Left cardiac atrium (tissue), 4 donors: ENCODE measurements at regions of chr12 and their contacts with region 1.

Region 1: GRCh38 chr12:117836999-117837736 is 131.6 kb downstream of the KSR2 start:
- DNase-seq: peak; percentile 75
- ATAC-seq: peak; percentile 55 to 71

Region 2: GRCh38 chr12:117212563-117213190 is 624.5 kb before region 1 on chr12:
- intact Hi-C with region 1: loop called (anchors 1 to 2 kb)
- DNase-seq: peak; percentile 72
- ATAC-seq: peak; percentile 84 to 88

Region 3: GRCh38 chr12:117236456-117237001 is 600.6 kb before region 1 on chr12:
- intact Hi-C with region 1: loop called in 1 of 2 experiments (anchors 2 kb)
- DNase-seq: peak; percentile 81
- ATAC-seq: peak in 1 of 2 donors; percentile 24

Region 4: DNA sequence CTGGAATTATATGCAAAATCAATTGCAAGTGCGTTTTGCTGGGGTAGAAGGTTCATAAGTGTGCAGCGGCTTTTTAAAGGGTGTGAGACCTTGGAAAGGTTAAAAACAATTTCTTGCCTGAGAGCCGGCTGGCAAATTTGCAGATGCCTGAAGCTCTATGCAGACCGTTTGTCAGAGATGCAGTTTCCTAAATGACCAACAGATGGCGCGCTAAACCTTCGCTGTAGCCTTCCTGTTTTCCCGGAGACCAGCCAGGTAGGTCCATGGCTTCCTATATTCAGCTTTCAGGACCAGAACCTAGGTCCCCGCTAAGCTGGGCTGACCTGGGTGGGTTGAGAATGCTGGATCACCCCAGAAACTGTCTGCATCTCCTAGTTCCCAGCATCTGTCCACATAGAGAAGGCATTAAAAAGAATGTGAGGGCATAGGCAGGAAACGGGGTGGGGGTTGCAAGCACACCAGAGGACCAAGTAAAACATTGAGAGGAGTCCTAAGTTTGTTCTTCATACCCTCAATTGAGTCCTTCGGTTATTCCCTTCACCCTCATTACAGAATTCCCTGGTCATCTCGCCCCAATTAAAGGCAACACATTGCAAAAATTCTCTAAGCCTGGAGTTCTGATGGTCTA is 470.0 kb before region 1 on chr12:
- intact Hi-C with region 1: loop called (anchors 5 kb)
- DNase-seq: peak; percentile 64
- ATAC-seq: peak in 1 of 2 donors; percentile 63

Region 5: DNA sequence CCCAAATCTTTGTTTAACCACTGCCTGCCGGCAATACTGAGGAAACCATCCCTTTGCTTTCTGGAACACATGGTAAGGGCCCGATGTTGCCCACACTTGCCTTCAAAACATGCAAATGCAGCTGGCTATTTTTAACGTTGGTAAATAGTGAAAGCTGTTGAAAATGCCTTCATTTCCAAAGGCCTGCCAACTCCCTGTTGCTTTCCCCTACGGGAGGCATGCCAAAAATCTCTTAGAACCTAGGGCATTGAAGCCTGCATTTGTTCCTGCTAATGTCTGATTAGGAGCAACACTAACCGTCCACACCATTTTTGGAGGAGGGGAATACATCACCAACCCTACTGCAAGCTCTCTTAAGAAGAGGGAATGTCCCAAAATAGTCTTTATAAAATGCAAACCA is 323.2 kb before region 1 on chr12:
- intact Hi-C with region 1: no loop called
- DNase-seq: no peak
- ATAC-seq: peak; percentile 70 to 86

Region 6: DNA sequence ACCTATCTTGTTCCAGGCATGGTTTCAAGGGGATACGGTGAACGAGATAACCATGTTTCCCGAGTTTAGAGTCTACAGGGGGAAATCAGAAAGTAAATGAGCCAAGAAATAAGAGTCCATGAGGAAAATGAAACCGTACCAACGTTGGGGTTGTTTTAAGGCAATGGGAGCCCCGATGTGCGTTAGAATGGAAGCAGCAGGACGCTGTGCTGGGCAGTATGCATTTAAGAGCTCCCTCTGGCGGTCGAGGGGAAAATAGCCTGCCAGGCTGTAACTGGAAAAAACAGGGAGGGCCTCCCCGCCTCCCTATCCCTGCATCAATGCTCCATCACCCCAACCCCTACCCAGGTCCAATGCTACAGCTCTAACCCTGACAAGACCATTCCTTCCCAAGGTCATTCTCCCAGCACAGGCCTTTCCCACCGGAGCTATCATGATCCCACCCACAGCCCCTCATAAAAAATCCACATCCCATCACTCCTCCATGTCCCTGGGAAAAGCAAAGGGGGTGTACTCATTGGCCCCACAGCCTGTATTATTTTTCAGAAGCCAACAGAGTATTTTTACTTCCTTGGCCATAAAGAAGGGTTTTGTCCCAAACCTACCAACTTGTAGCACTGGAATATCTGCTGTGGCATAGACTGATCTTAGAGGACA is 249.4 kb before region 1 on chr12:
- intact Hi-C with region 1: loop called in 1 of 2 experiments (anchors 10 kb)
- DNase-seq: peak; percentile 60
- ATAC-seq: peak; percentile 30 to 51

Region 7: DNA sequence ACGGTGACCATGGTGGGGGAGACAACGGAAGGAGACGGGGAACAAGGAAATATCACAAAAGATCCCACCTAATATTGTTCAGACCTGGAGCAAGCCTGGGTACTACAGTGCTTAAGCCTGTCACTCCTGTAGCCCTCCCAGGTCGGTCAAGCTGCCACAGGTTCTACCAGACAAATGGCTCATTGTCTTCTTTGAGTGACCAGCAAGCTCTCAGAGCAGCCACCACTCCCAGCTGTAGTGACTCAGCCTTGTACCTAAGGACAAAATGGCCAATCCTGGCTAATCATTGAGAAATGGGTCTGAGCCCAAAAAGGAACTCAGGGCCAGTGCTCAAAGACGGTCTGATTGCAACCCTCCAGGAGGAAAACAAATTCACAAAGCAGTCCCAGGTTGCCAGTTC is 237.3 kb before region 1 on chr12:
- intact Hi-C with region 1: no loop called
- DNase-seq: no peak
- ATAC-seq: no peak

Region 8: DNA sequence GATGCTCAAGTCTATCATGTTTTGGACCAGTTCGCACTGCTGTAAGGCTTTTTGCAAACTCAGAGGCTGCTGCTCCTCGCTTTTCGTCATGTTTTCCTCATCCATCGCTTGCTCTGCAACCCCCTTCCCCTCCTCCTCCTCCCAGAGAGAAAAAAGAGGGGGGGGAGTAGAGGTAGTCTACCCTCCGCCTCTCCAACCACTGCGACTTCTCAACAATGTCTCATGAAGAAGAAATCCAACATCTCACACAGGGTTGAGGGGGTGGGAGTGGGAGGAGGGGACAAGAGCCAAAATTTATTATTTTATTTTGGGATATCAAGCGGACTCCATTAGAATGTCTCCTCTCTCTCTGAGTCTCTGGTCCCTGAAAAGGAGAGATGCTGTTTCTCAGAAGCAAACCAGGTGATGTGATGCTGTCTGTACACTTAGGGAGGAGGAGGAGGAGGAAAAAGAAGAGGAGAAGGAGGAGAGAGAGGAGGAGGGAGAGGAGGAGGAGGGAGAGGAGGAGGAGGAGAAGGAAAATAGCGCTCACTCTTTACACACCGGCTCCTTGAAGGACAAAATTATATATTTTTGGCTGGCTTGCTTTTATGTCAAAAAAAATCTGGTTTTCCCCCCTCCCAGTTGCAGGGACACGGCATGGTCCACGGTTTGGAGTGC is 131.1 kb after region 1 on chr12:
- intact Hi-C with region 1: no loop called
- DNase-seq: no peak
- ATAC-seq: no peak

Region 9: DNA sequence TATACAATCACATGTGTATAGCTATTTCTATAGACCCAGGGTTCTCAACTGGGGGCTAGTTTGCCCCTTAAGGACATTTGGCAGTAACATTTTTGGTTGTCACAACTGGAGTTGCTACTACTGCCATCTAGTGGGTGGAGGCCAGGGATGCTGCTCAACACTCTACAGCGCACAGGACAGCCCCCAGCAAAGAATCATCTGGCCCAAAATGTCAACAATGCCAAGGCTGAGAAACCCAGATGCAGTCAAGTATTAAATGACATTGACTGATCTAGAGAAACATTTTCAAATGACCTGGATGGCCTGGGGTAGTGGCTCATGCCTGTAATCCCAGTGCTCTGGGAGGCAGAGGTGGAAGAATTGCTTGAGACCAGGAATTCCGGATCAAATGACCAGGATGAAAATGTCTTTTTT is 218.0 kb after region 1 on chr12:
- intact Hi-C with region 1: no loop called
- DNase-seq: peak; percentile 51
- ATAC-seq: no peak